Endothelial cell of umbilical vein (primary cell): ENCODE measurements at regions of chr14 and their contacts with region 1.

Region 1: DNA sequence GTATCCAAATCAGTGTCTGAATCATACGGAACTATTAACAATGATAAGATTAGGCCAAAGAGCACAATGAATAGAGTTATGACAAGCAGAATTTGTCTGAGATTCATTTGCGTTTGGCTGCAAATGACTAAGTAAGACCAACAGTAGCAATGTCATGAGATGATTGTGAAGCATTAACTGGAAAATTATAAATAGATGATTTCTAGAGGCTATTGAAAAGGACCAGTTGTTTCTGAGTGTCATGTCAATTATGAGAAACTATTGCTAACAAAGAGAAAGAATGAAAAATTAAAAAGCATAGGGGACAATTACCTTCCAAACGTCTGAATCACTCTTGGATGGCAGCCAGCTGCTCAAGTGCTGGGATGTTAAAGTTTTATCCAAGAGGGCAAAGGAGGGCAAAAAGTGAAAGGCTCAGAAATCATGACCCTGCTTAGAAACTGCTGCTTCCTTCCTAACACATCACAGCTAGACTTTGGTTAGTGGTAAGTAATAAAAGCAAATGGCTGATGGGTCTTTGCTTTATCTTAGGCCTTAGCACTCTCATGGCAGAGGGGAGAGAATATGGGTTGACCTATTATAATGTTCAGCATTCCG is 89.0 kb downstream of the AKAP6 start:
- DNase-seq: peak; percentile 89
- H3K4me3 ChIP-seq: no peak overlapping the region
- H3K27ac ChIP-seq: peak overlapping the region; percentile 54
- H3K4me1 ChIP-seq: peaks cover 36% of the 10 kb centered on the region
- H3K27me3 ChIP-seq: no peaks in the 10 kb centered on the region
- CTCF ChIP-seq: no peak
- POLR2A ChIP-seq: no peak

Region 2: DNA sequence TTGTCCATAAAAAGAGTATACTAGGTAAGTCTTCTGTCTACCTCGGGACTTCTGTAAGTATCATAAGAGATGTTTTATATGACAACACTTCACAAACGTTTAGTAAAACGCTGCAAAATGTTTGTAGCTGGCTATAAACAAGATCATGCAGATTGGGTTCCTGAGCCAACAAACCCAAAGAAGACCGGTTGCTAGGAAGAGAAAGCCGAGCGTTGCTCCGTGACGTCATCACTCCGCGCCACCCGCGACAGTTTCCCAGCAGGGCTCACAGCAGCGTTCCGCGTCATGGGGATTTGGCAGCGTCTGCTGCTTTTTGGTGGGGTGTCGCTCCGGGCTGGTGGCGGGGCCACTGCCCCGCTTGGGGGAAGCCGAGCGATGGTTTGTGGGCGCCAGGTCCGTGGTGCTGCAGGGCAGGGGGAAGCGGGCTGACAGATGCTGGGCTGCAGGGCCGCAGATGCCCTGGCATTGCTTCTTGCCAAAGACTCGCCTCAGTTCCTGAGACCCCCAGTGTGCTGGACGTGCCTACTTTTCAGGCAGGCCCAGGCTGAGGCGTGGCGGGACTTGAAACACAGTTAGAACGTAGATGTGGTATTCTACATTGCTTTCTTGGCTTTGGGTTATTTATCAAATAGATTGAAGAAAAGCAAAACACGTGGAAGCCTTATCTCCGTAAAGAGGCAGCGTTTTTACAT is 856.8 kb before region 1 on chr14 and contains the start of gene NUBPL:
- CTCF ChIA-PET with region 1: no interaction called
- POLR2A ChIA-PET with region 1: no interaction called
- dilution Hi-C with region 1: no loop called
- intact Hi-C with region 1: loop called (anchors 5 kb)
- DNase-seq: peak; percentile 95
- H3K4me3 ChIP-seq: peak within 1 kb of the TSS; percentile 32 to 80 (median 73)
- H3K27ac ChIP-seq: peak within 1 kb of the TSS; percentile 51
- H3K4me1 ChIP-seq: peaks cover 4% of the 10 kb centered on the region
- H3K27me3 ChIP-seq: peaks cover 0 to 4% of the 10 kb centered on the region in 2 experiments
- CTCF ChIP-seq: no peak
- POLR2A ChIP-seq: peak; percentile 78
- total RNA-seq, gene NUBPL: 8.2 and 12.3 TPM in 2 replicates

Region 3: DNA sequence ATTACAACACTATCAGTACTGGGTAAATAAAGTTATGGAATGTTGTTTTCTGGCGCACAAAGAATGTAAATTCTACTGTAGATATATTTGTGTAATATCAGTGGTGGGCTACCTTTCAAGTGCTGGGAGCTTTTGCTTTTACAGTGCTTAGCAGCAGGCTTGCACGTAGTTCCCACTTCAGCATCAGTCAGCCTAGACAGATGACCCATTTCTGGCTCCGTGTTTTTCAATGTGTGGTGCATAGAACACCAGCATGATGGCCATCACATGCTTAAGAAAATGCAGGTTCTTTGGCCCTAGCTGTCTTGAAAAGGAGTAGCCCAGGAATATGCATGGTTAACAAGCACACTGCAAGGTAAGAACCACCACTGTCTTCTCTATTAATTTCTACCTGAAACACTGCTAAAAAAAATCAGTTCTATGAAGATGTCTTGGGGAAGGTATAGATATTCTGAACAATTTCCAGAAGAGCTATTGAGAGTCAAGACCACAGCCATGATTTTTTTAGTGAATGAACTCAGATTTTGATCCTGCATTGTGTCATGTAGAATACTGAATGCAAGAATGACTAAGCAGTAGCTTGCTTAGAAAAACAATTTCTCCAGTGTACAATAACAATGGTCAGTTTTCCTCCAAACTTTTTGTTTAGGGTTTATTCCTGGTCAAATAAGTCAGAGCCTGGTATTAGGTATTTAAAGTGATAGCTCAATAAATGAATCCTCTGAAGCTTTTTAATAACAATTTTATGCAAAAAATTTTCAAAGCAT is 106.7 kb after region 1 on chr14:
- CTCF ChIA-PET with region 1: no interaction called
- POLR2A ChIA-PET with region 1: no interaction called
- dilution Hi-C with region 1: no loop called
- intact Hi-C with region 1: no loop called
- DNase-seq: peak; percentile 83
- H3K4me3 ChIP-seq: peak overlapping the region in 1 of 3 experiments; percentile 18
- H3K27ac ChIP-seq: peak overlapping the region; percentile 94
- H3K4me1 ChIP-seq: peaks cover 17% of the 10 kb centered on the region
- H3K27me3 ChIP-seq: no peaks in the 10 kb centered on the region
- CTCF ChIP-seq: no peak
- POLR2A ChIP-seq: no peak